Right ventricle myocardium inferior (tissue), 1 donor: ENCODE measurements at regions of chr19 and their contacts with region 1.

Region 1: GRCh38 chr19:42184401-42184861 is 33.0 kb downstream of the DEDD2 start:
- DNase-seq: peak; percentile 84
- ATAC-seq: peak; percentile 57

Region 2: GRCh38 chr19:42108527-42109389 is 75.7 kb before region 1 on chr19:
- intact Hi-C with region 1: loop called (anchors 2 kb)
- DNase-seq: peak; percentile 89
- ATAC-seq: peak; percentile 78

Region 3: DNA sequence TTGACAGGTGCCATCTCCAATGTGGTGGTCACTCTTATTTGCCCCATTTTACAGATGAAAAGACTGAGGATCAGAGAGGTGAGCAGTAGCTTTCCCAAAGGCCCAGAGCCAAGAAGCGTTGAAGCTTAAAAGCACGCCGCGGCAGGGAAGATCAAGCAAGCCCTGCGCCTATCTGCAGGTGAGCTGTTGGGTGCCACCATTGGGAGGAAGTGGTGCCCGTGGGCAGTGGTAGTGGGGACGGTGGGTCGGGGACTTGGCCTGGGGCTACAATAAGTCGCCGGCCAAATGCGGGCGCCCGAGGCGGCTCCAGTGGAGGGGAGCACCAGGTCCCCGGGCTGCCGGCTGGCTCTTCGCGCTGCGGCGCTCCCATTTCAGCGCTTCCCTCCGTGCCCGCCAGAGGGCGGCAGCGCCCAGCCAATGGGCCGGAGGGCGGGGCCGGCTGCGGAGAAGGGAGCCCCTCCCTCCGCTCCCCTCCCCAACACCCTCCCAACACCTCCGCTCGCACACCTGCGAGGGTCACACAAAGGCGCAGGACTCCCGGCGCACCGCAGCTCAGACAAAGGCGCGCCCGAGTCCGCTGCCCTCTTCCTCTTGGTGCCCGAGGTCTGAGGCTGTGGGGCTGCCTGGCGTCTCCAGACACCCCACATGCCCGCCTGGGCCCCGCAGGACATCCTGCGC is 51.4 kb before region 1 on chr19:
- intact Hi-C with region 1: loop called (anchors 2 kb)
- DNase-seq: peak; percentile 90
- ATAC-seq: peak; percentile 65